Dorsolateral prefrontal cortex (tissue), 120 donors: ENCODE measurements at regions of chr16 and their contacts with region 1.

Region 1: GRCh38 chr16:52741351-52741750 is 194.4 kb upstream of the TOX3 start:
- DNase-seq: no peak
- H3K4me3 ChIP-seq: peak overlapping the region in 2 of 59 donors; percentile 2 to 22
- H3K27ac ChIP-seq: no peak overlapping the region
- H3K27me3 ChIP-seq: peaks cover 0 to 2% (median 0%) of the 10 kb centered on the region in 45 donors
- CTCF ChIP-seq: no peak

Region 2: DNA sequence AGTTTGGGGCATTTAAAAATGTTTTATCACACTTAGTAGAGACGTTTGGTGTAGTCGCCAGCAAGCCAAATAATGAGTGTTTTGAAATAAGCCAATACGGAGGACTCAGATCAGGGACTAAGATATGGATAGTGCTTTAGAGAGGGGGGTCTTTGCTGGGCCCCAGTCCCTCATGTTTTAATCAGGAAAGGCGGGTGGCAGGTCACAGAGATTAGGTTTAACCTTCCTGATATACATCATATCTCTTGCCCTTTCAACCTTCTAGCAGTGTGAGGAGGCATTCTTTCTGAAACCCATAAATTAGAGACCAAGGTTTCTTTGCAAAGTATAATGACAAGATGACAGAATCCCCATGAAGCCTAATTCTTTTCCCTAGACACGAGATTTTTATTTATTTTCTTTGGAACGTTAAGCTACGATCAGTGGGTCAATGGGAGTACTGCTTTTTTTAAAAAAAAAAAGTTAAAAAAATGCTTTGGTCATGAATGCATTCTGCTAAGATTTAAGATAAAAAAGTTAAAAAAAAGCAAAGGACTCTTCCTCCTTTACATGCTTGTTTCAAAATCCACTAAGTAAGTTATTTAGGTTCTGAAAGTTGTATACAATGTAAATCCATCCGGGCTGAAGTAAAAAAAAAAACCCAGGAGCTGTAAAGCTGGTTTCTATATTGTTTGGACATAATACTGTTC is 1018.2 kb before region 1 on chr16:
- intact Hi-C with region 1: no loop called
- DNase-seq: no peak
- H3K4me3 ChIP-seq: no peak overlapping the region
- H3K27ac ChIP-seq: no peak overlapping the region
- H3K27me3 ChIP-seq: peaks cover 0 to 8% (median 0%) of the 10 kb centered on the region in 45 donors
- CTCF ChIP-seq: no peak

Region 3: DNA sequence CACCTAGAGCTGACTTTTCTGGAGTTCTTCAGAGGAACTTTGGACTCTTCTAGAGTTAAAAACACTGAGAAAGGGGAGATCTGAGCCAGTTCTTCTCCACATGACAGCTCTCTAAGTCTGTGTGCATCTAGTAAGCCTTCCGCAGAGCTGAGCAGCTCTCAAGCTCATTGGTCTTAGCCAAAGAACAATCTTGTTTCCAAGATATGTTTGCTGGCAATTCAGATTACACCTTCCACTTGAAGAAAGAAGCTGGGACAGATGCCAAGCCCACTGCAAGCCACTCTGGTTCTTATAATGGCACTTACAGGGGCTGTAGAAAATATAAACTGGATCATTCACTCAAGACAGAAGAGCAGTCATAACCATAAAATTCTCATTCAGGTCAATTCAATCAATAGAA is 60.4 kb before region 1 on chr16:
- intact Hi-C with region 1: loop called in 1 of 2 experiments (anchors 10 kb)
- DNase-seq: no peak
- H3K4me3 ChIP-seq: no peak overlapping the region
- H3K27ac ChIP-seq: no peak overlapping the region
- H3K27me3 ChIP-seq: peaks cover 0 to 16% (median 0%) of the 10 kb centered on the region in 45 donors
- CTCF ChIP-seq: no peak